ENCODE measurements at regions of chr2 and their contacts with region 1.

Region 1: GRCh38 chr2:119366649-119367471 is at the starts of genes C2orf76 and DBI:
- DNase-seq: peak; percentile 81 to 97 (median 90)
- ATAC-seq: peak; percentile 91
- H3K4me3 ChIP-seq: peak within 1 kb of the TSS; percentile 66 to 96
- H3K4me3 Mint-ChIP-seq: peak within 1 kb of the TSS; percentile 97
- H3K27ac ChIP-seq: peak within 1 kb of the TSS; percentile 68 to 92
- H3K27ac Mint-ChIP-seq: peak within 1 kb of the TSS; percentile 96
- H3K4me1 ChIP-seq: peaks cover 19% of the 10 kb centered on the region
- H3K4me1 Mint-ChIP-seq: peaks cover 61% of the 10 kb centered on the region
- H3K27me3 ChIP-seq: no peaks in the 10 kb centered on the region
- H3K27me3 Mint-ChIP-seq: no peaks in the 10 kb centered on the region
- CTCF ChIP-seq: no peak
- total RNA-seq, gene C2orf76: 5.2 to 5.8 TPM
- total RNA-seq, gene DBI: 33.9 to 35.6 TPM

Region 2: DNA sequence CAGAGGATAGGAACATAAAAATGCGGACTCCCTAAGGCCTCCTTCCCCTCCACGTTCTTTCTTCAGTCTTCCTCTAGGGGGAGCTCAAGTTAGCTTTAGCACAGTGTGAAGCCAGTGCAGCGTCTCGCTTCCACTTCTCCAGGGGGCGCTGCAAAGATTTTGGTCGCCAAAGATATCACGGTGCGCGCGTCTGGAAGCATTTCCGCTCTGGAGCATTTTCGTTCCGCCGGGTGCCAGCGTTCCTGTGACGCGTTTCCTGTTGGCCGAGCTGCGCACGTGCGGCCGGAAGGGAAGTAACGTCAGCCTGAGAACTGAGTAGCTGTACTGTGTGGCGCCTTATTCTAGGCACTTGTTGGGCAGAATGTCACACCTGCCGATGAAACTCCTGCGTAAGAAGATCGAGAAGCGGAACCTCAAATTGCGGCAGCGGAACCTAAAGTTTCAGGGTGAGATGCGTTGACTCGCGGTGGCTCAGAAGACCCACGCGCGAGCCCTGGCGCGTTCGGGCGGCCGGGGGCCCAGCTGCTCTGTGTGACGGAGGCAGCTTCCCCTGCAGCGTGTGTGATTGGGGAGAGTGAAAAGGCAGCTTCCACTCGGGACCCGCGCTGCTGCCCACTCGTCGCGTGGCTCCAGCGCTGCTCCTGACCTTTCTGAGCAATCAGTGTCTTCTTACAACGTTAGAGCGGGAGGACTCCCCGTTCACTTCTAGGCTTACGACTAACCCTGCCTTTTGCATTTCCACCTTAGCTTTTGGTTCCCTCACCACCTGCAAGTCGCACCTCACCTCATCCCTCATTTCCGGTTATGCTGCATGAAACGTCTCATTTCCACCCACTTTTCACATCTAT is 1552.2 kb before region 1 on chr2 and contains the start of gene DDX18:
- CTCF ChIA-PET with region 1: no interaction called
- POLR2A ChIA-PET with region 1: no interaction called
- intact Hi-C with region 1: loop called (anchors 2 to 10 kb)
- DNase-seq: peak; percentile 95 to 100 (median 97)
- ATAC-seq: peak; percentile 84
- H3K4me3 ChIP-seq: peak within 1 kb of the TSS; percentile 58 to 77
- H3K4me3 Mint-ChIP-seq: peak within 1 kb of the TSS; percentile 88
- H3K27ac ChIP-seq: peak within 1 kb of the TSS; percentile 90 to 97
- H3K27ac Mint-ChIP-seq: peak within 1 kb of the TSS; percentile 98
- H3K4me1 ChIP-seq: peaks cover 30% of the 10 kb centered on the region
- H3K4me1 Mint-ChIP-seq: peaks cover 40% of the 10 kb centered on the region
- H3K27me3 ChIP-seq: no peaks in the 10 kb centered on the region
- H3K27me3 Mint-ChIP-seq: no peaks in the 10 kb centered on the region
- CTCF ChIP-seq: peak; percentile 98
- total RNA-seq, gene DDX18: 124 to 129 TPM

Region 3: GRCh38 chr2:118088051-118089024 is 1278.5 kb before region 1 on chr2 and contains the start of gene INSIG2:
- CTCF ChIA-PET with region 1: no interaction called
- POLR2A ChIA-PET with region 1: no interaction called
- intact Hi-C with region 1: loop called in 1 of 2 experiments (anchors 2 kb)
- DNase-seq: peak; percentile 79 to 95 (median 86)
- ATAC-seq: peak; percentile 88
- H3K4me3 ChIP-seq: peak within 1 kb of the TSS; percentile 70 to 98
- H3K4me3 Mint-ChIP-seq: peak within 1 kb of the TSS; percentile 92
- H3K27ac ChIP-seq: peak within 1 kb of the TSS; percentile 80
- H3K27ac Mint-ChIP-seq: peak within 1 kb of the TSS; percentile 95
- H3K4me1 ChIP-seq: peaks cover 16% of the 10 kb centered on the region
- H3K4me1 Mint-ChIP-seq: peaks cover 34% of the 10 kb centered on the region
- H3K27me3 ChIP-seq: no peaks in the 10 kb centered on the region
- H3K27me3 Mint-ChIP-seq: peaks cover 4% of the 10 kb centered on the region
- CTCF ChIP-seq: no peak
- total RNA-seq, gene INSIG2: 10.9 to 11.8 TPM

Region 4: DNA sequence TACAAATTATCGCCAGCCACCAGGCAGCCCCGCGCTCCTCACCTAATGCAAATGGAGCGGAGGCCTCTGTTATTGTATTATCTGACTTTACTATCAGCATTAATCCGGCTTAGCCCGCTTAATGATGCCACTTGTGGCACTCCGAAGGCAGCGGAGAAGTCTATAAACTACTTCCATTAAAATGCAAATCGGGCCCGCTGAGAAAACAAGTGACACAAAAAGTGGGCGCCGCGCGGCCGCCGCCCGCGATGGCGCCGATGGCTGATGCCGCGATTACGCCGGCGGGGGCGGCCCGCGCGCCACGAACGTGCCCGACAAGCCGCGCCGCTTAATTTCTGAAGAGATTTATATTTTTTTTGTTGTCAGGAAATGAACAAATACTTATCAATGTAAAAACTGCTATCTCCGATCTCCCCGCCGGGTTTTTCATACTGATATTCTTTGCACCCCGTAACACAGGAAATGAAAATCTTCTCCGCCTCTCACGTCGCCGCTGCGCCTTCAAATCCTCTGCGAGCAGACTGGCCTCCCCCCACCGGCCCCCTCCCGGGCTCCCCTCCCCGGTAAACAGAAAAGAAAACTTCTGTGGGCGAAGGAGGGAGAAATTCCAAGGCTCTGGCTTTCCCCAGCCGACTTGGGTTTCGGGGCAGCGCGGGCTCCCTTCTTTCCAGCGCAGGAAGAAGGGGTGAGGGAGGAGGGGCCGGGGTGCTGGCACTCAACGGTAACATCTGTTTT is 1056.7 kb before region 1 on chr2:
- CTCF ChIA-PET with region 1: no interaction called
- POLR2A ChIA-PET with region 1: no interaction called
- intact Hi-C with region 1: loop called in 1 of 2 experiments (anchors 10 kb)
- DNase-seq: peak; percentile 22 to 77 (median 56)
- ATAC-seq: peak; percentile 75
- H3K4me3 ChIP-seq: peak overlapping the region; percentile 66 to 69
- H3K4me3 Mint-ChIP-seq: peak overlapping the region; percentile 88
- H3K27ac ChIP-seq: peak overlapping the region; percentile 81 to 88
- H3K27ac Mint-ChIP-seq: peak overlapping the region; percentile 97
- H3K4me1 ChIP-seq: peaks cover 8% of the 10 kb centered on the region
- H3K4me1 Mint-ChIP-seq: peaks cover 5% of the 10 kb centered on the region
- H3K27me3 ChIP-seq: no peaks in the 10 kb centered on the region
- H3K27me3 Mint-ChIP-seq: peaks cover 4% of the 10 kb centered on the region
- CTCF ChIP-seq: no peak

Region 5: DNA sequence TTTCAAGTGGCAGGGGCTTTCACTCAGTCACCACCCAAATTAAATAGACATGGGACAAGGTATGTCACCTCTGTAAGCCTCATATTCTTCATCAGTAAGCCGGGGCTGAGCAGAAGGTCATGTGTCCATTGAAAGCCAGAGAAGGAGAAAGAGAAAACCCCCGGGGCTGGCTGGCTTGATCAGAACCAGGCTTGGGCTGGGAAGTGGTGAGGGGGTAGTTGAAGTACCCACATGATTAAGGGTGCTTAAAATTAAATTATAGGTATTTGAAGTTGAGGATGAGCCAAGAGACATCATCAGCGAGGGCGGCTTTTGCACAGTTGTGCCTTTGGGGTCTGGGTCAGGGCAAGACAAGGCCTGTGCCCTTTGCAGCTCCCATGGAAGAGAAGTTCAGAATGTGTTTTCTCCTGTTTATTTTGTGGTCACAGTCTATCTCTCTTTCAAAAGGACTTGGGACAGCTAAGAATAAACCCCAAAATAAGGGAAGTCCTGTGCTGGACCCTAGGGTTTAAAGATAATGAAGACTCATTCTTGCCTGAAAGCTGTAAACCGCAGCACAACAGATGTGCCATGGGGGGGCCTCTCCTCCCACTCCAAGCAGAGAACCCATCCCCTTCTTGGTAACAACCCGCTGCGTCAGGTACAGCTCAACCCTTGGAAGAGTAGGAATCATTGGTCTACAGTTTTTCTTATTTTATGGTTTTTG is 10.6 kb after region 1 on chr2:
- CTCF ChIA-PET with region 1: no interaction called
- POLR2A ChIA-PET with region 1: no interaction called
- intact Hi-C with region 1: no loop called
- DNase-seq: peak in 1 of 9 experiments; percentile 32
- ATAC-seq: no peak
- H3K4me3 ChIP-seq: no peak overlapping the region
- H3K4me3 Mint-ChIP-seq: no peak overlapping the region
- H3K27ac ChIP-seq: no peak overlapping the region
- H3K27ac Mint-ChIP-seq: no peak overlapping the region
- H3K4me1 ChIP-seq: no peaks in the 10 kb centered on the region
- H3K4me1 Mint-ChIP-seq: no peaks in the 10 kb centered on the region
- H3K27me3 ChIP-seq: no peaks in the 10 kb centered on the region
- H3K27me3 Mint-ChIP-seq: no peaks in the 10 kb centered on the region
- CTCF ChIP-seq: no peak

Region 6: DNA sequence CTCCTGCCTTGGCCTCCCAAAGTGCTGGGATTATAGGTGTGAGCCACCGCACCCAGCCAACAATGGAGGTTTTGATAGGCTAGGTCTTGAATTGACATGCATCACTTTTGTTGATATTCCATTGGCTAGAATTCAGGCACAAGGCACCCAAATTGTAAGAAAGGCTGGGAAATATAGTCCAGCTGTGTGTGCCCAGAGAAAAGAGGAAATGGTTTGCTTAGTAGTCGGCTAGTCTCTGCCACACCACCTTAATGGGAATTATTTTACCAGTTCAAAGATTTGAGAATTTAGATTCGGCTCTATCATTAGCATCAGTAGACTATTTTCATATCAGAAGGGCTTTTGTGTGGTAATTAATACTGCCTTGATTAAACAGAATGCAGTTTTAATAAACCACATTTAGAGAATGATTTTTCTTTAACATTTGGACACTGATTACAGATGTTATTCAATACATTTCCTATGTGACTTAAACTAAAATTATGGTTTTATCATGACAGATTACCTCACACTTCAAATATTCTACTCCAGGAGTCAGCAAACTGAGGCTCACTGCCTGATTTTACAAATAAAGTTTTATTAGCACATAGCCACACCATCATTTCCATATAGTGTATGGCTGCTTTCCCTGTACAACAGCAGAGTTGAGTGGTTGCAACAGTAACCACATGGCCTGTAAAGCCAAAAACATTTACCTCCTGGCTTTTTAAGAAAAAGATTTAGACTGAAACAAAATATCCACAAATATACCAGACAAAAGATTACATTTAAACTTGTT is 27.3 kb after region 1 on chr2:
- CTCF ChIA-PET with region 1: no interaction called
- POLR2A ChIA-PET with region 1: no interaction called
- intact Hi-C with region 1: no loop called
- DNase-seq: peak in 1 of 9 experiments; percentile 19
- ATAC-seq: no peak
- H3K4me3 ChIP-seq: no peak overlapping the region
- H3K4me3 Mint-ChIP-seq: no peak overlapping the region
- H3K27ac ChIP-seq: no peak overlapping the region
- H3K27ac Mint-ChIP-seq: no peak overlapping the region
- H3K4me1 ChIP-seq: no peaks in the 10 kb centered on the region
- H3K4me1 Mint-ChIP-seq: no peaks in the 10 kb centered on the region
- H3K27me3 ChIP-seq: no peaks in the 10 kb centered on the region
- H3K27me3 Mint-ChIP-seq: no peaks in the 10 kb centered on the region
- CTCF ChIP-seq: no peak

Region 7: DNA sequence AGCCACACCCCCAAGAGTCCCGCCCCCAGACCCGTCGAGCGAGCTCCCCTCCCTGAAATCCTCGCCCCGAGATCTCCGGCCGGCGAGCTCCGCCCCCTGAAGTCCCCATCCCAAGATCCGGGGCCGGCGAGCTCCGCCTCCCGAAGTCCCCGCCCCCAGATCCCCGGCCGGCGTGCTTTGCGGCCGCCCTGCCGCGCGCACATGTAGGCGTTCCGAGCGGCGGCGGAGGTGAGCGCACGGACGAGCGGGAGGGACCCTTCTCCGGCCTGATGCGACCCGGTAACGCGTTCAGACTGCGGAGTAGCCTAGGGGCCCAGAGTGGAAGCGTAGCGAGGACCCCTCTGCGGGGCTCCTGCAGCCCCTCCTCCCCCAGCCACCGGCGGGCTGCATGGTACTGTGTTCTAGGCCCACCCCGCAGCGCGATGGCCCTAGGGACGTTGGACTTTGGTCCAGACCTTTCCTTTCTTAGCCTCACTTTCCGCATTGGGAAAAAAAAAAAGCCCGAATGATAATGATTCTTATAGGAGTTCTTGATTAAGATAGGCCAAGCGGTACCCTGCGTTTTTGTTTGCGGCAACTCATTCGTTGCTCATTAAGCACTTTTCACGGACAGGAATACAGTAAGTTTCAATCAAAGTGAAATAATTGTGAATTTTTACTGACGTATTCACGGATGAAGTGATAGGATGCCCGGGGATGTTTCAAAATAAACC is 312.3 kb after region 1 on chr2 and contains the start of gene TMEM177:
- CTCF ChIA-PET with region 1: no interaction called
- POLR2A ChIA-PET with region 1: interaction called, 3 read pairs
- intact Hi-C with region 1: loop called in 1 of 2 experiments (anchors 2 kb)
- DNase-seq: peak; percentile 77 to 93 (median 87)
- ATAC-seq: peak; percentile 86
- H3K4me3 ChIP-seq: peak within 1 kb of the TSS; percentile 71 to 90
- H3K4me3 Mint-ChIP-seq: peak within 1 kb of the TSS; percentile 89
- H3K27ac ChIP-seq: peak within 1 kb of the TSS; percentile 59 to 69
- H3K27ac Mint-ChIP-seq: peak within 1 kb of the TSS; percentile 92
- H3K4me1 ChIP-seq: peaks cover 18% of the 10 kb centered on the region
- H3K4me1 Mint-ChIP-seq: peaks cover 27% of the 10 kb centered on the region
- H3K27me3 ChIP-seq: no peaks in the 10 kb centered on the region
- H3K27me3 Mint-ChIP-seq: no peaks in the 10 kb centered on the region
- CTCF ChIP-seq: no peak
- total RNA-seq, gene TMEM177: 2.1 to 3.8 TPM

Region 8: DNA sequence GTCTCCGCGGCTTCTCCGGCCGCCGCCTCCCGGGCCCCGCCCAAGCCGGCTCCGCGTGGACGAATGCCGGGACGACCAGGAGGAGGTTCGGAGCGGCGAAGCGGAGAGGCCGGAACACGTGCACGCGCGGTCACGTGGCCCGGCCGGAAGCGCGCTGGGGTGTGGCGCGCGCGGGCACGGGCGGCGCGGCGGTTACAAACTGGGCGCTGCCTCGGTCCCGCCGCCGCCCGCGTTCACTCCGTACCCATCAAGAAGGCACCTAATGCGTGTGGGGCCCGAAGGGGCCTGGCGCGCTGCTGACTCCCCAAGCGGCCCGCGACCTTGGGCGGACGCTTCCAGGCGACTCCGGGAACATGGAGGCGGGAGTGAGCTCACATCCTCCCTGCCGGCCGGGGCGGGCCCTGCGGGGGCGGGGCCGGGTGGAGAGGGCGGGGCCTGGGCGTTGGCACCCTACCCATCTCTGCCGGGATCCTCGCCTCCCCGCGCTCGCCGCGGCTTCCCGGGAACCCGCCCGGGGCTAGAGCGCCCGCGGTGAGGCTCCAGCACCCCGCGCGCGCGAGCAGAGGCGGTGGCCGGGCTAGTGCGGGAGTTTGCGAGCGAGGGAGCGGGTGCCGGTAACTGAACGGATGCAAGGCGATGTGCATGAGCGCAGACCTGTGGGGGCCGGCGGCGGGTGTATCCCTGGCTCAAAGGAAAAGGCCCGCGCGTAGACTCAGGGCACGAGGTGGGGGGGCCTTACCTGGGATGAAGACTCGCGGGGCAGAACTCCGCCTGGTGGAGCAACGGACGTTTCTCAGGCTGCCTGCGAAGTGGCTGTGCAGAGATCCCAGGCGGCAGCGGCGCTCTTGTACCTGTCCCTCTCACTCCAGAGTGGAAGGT is 856.4 kb after region 1 on chr2 and contains the start of gene TMEM185B:
- CTCF ChIA-PET with region 1: no interaction called
- POLR2A ChIA-PET with region 1: no interaction called
- intact Hi-C with region 1: loop called in 1 of 2 experiments (anchors 10 kb)
- DNase-seq: peak; percentile 81 to 91 (median 87)
- ATAC-seq: peak; percentile 95
- H3K4me3 ChIP-seq: peak within 1 kb of the TSS; percentile 80 to 87
- H3K4me3 Mint-ChIP-seq: peak within 1 kb of the TSS; percentile 87
- H3K27ac ChIP-seq: peak within 1 kb of the TSS; percentile 90 to 95
- H3K27ac Mint-ChIP-seq: peak within 1 kb of the TSS; percentile 93
- H3K4me1 ChIP-seq: peaks cover 36% of the 10 kb centered on the region
- H3K4me1 Mint-ChIP-seq: peaks cover 60% of the 10 kb centered on the region
- H3K27me3 ChIP-seq: no peaks in the 10 kb centered on the region
- H3K27me3 Mint-ChIP-seq: no peaks in the 10 kb centered on the region
- CTCF ChIP-seq: no peak
- total RNA-seq, gene TMEM185B: 21.3 to 23.5 TPM

Measured in CD8-positive, alpha-beta T cell (primary cell).